ENCODE measurements at regions of chr1 and their contacts with region 1.

Region 1: DNA sequence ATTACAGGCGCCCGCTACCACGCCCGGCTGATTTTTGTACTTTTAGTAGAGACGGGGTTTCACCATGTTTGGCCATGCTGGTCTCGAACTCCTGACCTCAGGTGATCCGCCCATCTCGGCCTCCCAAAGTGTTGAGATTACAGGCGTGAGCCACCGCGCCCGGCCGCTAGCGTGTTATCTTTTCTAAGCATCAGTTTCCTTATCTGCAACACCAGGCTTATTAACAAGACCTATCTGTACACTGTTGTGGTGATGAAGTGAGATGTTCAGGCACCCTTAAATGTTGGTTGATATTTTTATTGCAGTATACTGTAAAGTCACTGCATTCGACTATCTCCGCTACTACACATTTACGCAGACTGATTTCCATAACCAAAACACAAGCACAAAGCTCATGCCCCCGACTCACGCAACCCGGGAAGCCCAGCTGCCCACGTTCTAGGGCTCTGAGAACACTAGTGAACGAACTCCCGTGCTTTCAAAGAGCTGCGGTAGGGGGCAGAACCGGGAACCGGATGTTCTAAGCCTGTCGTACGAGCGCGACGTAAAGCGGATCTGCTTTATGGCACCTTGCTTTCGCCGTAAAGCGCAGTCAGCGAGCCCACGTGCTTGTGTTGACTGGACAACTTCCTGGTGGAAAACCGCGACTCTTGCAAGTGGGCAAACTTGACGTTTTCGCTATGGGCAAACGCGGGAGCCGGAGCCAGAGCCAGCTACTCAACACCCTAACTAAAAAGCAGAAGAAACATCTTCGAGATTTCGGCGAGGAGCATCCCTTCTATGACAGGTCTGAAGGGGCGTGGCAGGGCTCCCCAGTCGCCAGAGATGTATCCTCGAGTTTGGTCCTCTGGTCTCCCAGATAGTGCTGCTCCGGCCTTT is at the start of gene UTP25:
- DNase-seq: peak; percentile 96
- total RNA-seq, gene UTP25: 4.1 TPM

Region 2: GRCh38 chr1:209576798-209577197 is 250.8 kb before region 1 on chr1:
- intact Hi-C with region 1: loop called (anchors 10 kb)
- DNase-seq: peak; percentile 91

Region 3: GRCh38 chr1:209769171-209769904 is 58.3 kb before region 1 on chr1:
- intact Hi-C with region 1: loop called (anchors 5 kb)
- DNase-seq: peak; percentile 90

Region 4: DNA sequence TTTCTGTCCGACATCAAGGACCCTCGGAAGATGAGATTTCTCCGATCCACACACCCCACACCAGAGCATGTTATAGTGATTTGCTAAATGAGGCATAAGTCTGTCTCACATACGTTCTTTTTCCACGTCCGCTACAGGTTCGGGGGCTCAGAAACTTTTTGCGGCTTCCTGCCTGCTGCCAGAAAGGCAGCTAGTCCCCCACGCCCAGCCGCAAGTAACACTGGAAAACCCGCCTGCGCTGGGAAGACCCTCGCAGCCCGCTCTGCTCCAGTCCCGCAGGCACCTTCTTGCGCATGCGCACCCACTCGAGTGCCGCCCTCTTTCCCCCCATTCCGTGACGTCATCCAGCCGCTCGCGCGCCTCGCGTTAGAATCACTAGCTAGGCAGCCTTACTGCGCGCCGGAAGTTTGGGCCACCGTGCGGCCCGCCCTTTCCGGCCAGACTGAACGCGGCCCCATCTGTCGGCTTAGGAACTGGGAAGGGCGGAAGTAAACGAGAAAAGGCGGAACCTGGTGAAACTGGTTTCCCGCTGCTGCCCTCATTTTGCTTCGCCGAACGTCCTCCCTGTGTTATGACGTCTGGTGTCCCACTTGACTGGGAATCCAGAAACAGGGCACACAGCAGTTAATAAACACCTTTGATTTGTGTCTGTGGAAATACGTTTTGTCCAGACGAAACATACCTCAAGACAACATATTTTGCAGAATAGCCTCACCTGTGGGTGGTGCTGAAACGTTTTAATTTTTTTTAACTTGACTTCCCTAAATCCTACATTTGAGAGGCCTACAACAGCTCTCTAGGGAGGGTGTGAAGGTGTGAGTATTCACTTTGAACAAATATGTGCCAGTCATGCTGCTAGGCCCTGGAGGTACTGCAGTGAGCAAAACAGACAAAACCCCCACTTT is 43.1 kb before region 1 on chr1 and contains the start of gene C1orf74:
- intact Hi-C with region 1: loop called (anchors 1 kb)
- DNase-seq: peak; percentile 100
- total RNA-seq, gene C1orf74: 1.6 TPM

Measured in cardiac septum (tissue), 1 donor.